ENCODE measurements at regions of chr10 and their contacts with region 1.

Region 1: GRCh38 chr10:93482145-93482834 is at the start of gene MYOF:
- DNase-seq: peak; percentile 69
- ATAC-seq: peak; percentile 87
- H3K4me3 Mint-ChIP-seq: peak within 1 kb of the TSS; percentile 82
- H3K27ac Mint-ChIP-seq: peak within 1 kb of the TSS; percentile 30
- H3K4me1 Mint-ChIP-seq: peaks cover 11% of the 10 kb centered on the region
- H3K27me3 Mint-ChIP-seq: peaks cover 21% of the 10 kb centered on the region
- total RNA-seq, gene MYOF: 0.37 to 0.39 TPM

Region 2: GRCh38 chr10:93142534-93142933 is 339.8 kb before region 1 on chr10:
- CTCF ChIA-PET with region 1: no interaction called
- POLR2A ChIA-PET with region 1: no interaction called
- DNase-seq: no peak
- ATAC-seq: no peak
- H3K4me3 Mint-ChIP-seq: no peak overlapping the region
- H3K27ac Mint-ChIP-seq: no peak overlapping the region
- H3K4me1 Mint-ChIP-seq: no peaks in the 10 kb centered on the region
- H3K27me3 Mint-ChIP-seq: peaks cover 8% of the 10 kb centered on the region

Region 3: GRCh38 chr10:93352638-93353383 is 129.5 kb before region 1 on chr10:
- CTCF ChIA-PET with region 1: interaction called, 35 read pairs
- POLR2A ChIA-PET with region 1: no interaction called
- DNase-seq: no peak
- ATAC-seq: no peak
- H3K4me3 Mint-ChIP-seq: no peak overlapping the region
- H3K27ac Mint-ChIP-seq: no peak overlapping the region
- H3K4me1 Mint-ChIP-seq: peaks cover 3% of the 10 kb centered on the region
- H3K27me3 Mint-ChIP-seq: no peaks in the 10 kb centered on the region

Region 4: GRCh38 chr10:93376372-93377293 is 105.7 kb before region 1 on chr10:
- CTCF ChIA-PET with region 1: interaction called, 521 read pairs
- POLR2A ChIA-PET with region 1: interaction called, 3 read pairs
- DNase-seq: peak; percentile 69
- ATAC-seq: peak; percentile 70
- H3K4me3 Mint-ChIP-seq: no peak overlapping the region
- H3K27ac Mint-ChIP-seq: no peak overlapping the region
- H3K4me1 Mint-ChIP-seq: peaks cover 15% of the 10 kb centered on the region
- H3K27me3 Mint-ChIP-seq: no peaks in the 10 kb centered on the region

Region 5: GRCh38 chr10:93393211-93393610 is 89.1 kb before region 1 on chr10:
- CTCF ChIA-PET with region 1: interaction called, 39 read pairs
- POLR2A ChIA-PET with region 1: no interaction called
- DNase-seq: no peak
- ATAC-seq: no peak
- H3K4me3 Mint-ChIP-seq: no peak overlapping the region
- H3K27ac Mint-ChIP-seq: no peak overlapping the region
- H3K4me1 Mint-ChIP-seq: no peaks in the 10 kb centered on the region
- H3K27me3 Mint-ChIP-seq: no peaks in the 10 kb centered on the region

Region 6: DNA sequence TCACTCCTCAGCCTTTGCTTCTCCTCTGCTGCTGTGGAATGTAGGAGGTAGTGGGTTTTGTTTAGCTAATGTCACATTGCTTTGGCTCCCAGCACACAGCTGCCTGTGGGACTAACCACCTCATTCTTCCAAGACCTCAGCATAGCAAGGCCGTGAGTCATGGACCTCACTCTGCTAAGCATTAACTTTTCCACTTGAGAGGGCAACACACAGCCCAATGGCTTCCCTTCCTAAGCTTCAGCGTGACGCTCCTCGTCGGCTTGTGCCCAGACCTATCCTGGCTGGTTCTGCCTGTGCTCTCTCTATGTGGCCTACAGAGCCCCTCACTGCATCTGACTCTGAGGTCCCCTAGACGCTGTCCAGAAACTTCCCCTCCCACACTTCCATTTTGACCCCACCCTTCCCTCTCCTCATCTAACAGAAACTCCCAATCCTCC is 23.5 kb before region 1 on chr10:
- CTCF ChIA-PET with region 1: interaction called, 21 read pairs
- POLR2A ChIA-PET with region 1: no interaction called
- DNase-seq: no peak
- ATAC-seq: no peak
- H3K4me3 Mint-ChIP-seq: no peak overlapping the region
- H3K27ac Mint-ChIP-seq: no peak overlapping the region
- H3K4me1 Mint-ChIP-seq: peaks cover 6% of the 10 kb centered on the region
- H3K27me3 Mint-ChIP-seq: peaks cover 3% of the 10 kb centered on the region

Region 7: GRCh38 chr10:93496322-93497041 is 14.2 kb after region 1 on chr10 and contains the start of gene CEP55:
- CTCF ChIA-PET with region 1: interaction called, 27 read pairs
- POLR2A ChIA-PET with region 1: interaction called, 5 read pairs
- DNase-seq: peak; percentile 96
- ATAC-seq: peak; percentile 99
- H3K4me3 Mint-ChIP-seq: peak within 1 kb of the TSS; percentile 82
- H3K27ac Mint-ChIP-seq: peak within 1 kb of the TSS; percentile 89
- H3K4me1 Mint-ChIP-seq: peaks cover 40% of the 10 kb centered on the region
- H3K27me3 Mint-ChIP-seq: peaks cover 15% of the 10 kb centered on the region
- total RNA-seq, gene CEP55: 81.1 TPM

Region 8: DNA sequence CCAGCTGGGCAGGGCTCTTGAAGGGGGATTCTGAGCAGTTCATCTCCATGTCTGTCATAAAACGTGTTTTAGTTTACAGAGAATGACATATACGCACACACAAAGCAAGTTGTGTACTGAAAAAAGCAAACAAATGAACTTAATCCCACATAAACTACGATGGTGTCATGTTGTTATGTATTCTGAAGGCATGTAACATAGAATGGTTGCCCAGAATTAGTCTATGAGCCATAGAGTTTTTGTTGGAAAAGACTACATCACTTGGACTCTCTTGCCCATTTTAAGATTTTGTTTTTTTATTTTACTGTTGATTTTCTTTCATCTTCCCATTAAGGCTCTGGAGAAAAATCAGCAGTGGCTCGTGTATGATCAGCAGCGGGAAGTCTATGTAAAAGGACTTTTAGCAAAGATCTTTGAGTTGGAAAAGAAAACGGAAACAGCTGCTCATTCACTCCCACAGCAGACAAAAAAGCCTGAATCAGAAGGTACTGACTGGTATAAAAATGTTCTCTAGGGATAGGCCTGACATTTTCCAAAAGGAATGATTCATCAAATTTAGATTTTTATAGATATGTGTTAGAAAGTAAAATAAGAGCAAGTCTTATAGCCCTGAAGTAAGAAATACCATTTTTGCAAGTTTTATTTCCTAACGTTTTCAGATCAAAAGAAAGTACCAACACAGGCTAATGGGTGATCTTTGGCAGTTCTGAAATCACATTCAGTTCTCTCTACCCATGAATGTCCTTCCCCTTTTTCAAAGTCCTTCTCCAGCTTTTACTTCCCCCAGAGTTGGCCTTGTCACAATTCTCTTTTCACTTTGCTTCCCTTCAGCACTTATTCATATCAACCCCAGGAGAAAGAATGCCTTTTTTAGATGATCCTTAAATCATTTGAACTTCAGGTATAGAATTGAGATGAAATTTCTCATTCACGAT is 33.0 kb after region 1 on chr10:
- CTCF ChIA-PET with region 1: interaction called, 49 read pairs
- POLR2A ChIA-PET with region 1: no interaction called
- DNase-seq: no peak
- ATAC-seq: no peak
- H3K4me3 Mint-ChIP-seq: no peak overlapping the region
- H3K27ac Mint-ChIP-seq: no peak overlapping the region
- H3K4me1 Mint-ChIP-seq: no peaks in the 10 kb centered on the region
- H3K27me3 Mint-ChIP-seq: no peaks in the 10 kb centered on the region

Measured in activated CD8-positive, alpha-beta T cell treated with anti-CD3 and anti-CD28 coated beads, Interleukin-2, amount 10 ng/mL, durations not matched to agents 7 days and 5 days (primary cell).